K562 (cell line): ENCODE measurements at regions of chr6 and their contacts with region 1.

Region 1: DNA sequence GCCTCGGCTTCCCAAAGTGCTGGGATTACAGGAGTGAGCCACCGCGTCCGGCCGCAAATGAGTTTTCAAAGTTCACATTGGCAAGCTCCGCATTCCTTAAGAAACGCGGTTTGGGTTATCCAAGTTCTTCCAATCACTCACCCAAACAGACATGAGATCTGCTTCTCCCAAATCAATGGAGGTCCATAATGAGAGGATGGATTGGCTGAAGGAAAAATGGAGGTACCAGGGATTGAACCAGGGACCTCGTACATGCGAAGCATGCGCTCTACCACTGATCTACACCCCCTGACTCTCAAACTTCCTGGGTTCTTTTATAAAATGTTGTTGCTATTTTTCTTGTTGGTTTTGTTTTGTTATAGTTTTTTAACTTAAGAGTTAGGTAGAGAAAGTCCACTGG is 170.0 kb downstream of the GPX5 start:
- DNase-seq: no peak
- ATAC-seq: no peak
- H3K4me3 ChIP-seq: no peak overlapping the region
- H3K27ac ChIP-seq: no peak overlapping the region
- H3K4me1 ChIP-seq: peaks cover 6 to 7% of the 10 kb centered on the region in 2 experiments; a peak in 3 of 5 replicates
- H3K27me3 ChIP-seq: no peaks in the 10 kb centered on the region; a peak in 1 of 5 replicates
- CTCF ChIP-seq: no peak
- EP300 ChIP-seq: no peak
- POLR2A ChIP-seq: no peak
- RAD21 ChIP-seq: no peak

Region 2: DNA sequence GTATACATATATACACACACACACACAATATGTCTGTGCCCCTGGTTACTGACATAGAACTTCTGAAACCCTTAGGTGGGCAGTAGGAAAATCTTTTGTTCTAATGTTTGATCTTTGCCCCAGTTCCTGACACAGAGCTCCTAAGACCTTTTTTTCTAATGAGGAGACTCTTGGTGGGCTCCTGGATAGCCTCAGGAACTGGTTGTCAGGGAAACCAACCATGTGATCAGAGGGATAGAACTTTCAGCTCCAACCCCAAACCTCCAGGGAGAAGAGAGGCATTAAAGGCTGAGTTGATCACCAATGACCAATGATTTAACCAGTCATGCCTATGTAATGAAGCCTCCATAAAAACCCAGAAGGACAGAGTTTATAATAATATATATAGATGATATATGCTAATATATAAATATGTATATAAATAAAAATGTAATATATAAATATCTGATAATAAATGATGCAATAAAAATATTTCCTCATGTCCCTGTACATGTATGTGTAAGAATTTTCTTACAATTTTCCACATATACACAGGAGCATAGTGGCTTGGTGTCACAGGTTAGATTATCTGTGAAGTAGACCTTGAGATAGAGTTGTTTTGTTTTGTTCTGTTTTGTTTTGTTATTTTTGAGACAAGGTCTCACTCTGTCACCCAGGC is 76.7 kb before region 1 on chr6:
- CTCF ChIA-PET with region 1: no interaction called
- POLR2A ChIA-PET with region 1: no interaction called
- in situ Hi-C with region 1: no loop called
- intact Hi-C with region 1: no loop called
- DNase-seq: no peak
- ATAC-seq: no peak
- H3K4me3 ChIP-seq: no peak overlapping the region
- H3K27ac ChIP-seq: no peak overlapping the region
- H3K4me1 ChIP-seq: peaks cover 11 to 13% of the 10 kb centered on the region in 2 experiments; a peak in 4 of 5 replicates
- H3K27me3 ChIP-seq: no peaks in the 10 kb centered on the region
- CTCF ChIP-seq: no peak
- EP300 ChIP-seq: no peak
- POLR2A ChIP-seq: no peak
- RAD21 ChIP-seq: no peak

Region 3: GRCh38 chr6:29602564-29603361 is 907.0 kb after region 1 on chr6:
- CTCF ChIA-PET with region 1: no interaction called
- POLR2A ChIA-PET with region 1: no interaction called
- in situ Hi-C with region 1: loop called (anchors 10 kb)
- intact Hi-C with region 1: no loop called
- DNase-seq: peak; percentile 74 to 84 (median 78)
- ATAC-seq: peak; percentile 89
- H3K4me3 ChIP-seq: no peak overlapping the region
- H3K27ac ChIP-seq: no peak overlapping the region; the same call in 2 of the 3 replicates
- H3K4me1 ChIP-seq: peaks cover 0 to 3% of the 10 kb centered on the region in 2 experiments; a peak in 3 of 5 replicates
- H3K27me3 ChIP-seq: no peaks in the 10 kb centered on the region
- CTCF ChIP-seq: peak; percentile 34 to 60 (median 59); a peak in 5 of 6 replicates
- EP300 ChIP-seq: no peak
- POLR2A ChIP-seq: no peak
- RAD21 ChIP-seq: peak; percentile 19 to 35; a peak in 3 of 4 replicates